HepG2 (cell line): ENCODE measurements at regions of chr14 and their contacts with region 1.

Region 1: GRCh38 chr14:31456841-31457664 is at the start of gene DTD2:
- DNase-seq: peak; percentile 98
- ATAC-seq: peak; percentile 98
- H3K4me3 ChIP-seq: peak within 1 kb of the TSS; percentile 74 to 88 (median 84)
- H3K27ac ChIP-seq: peak within 1 kb of the TSS; percentile 87
- H3K4me1 ChIP-seq: peaks cover 21% of the 10 kb centered on the region
- H3K27me3 ChIP-seq: no peaks in the 10 kb centered on the region; a peak in 1 of 5 replicates
- CTCF ChIP-seq: no peak
- EP300 ChIP-seq: peak; percentile 22 to 60; a peak in 2 of 4 replicates
- POLR2A ChIP-seq: peak; percentile 98 to 99
- RAD21 ChIP-seq: peak; percentile 79
- total RNA-seq, gene DTD2: 49.8 and 68.8 TPM in 2 replicates

Region 2: GRCh38 chr14:31380106-31380505 is 76.9 kb before region 1 on chr14:
- CTCF ChIA-PET with region 1: no interaction called
- POLR2A ChIA-PET with region 1: interaction called, 3 read pairs
- in situ Hi-C with region 1: no loop called
- intact Hi-C with region 1: loop called (anchors 2 kb)
- DNase-seq: no peak
- ATAC-seq: no peak
- H3K4me3 ChIP-seq: no peak overlapping the region
- H3K27ac ChIP-seq: no peak overlapping the region
- H3K4me1 ChIP-seq: peaks cover 26% of the 10 kb centered on the region
- H3K27me3 ChIP-seq: no peaks in the 10 kb centered on the region
- CTCF ChIP-seq: no peak
- EP300 ChIP-seq: no peak
- POLR2A ChIP-seq: no peak
- RAD21 ChIP-seq: no peak

Region 3: GRCh38 chr14:31429791-31430190 is 27.3 kb before region 1 on chr14:
- CTCF ChIA-PET with region 1: no interaction called
- POLR2A ChIA-PET with region 1: interaction called, 17 read pairs
- in situ Hi-C with region 1: loop called (anchors 5 kb)
- intact Hi-C with region 1: no loop called
- DNase-seq: no peak
- ATAC-seq: no peak
- H3K4me3 ChIP-seq: no peak overlapping the region
- H3K27ac ChIP-seq: no peak overlapping the region
- H3K4me1 ChIP-seq: peaks cover 8% of the 10 kb centered on the region; the same call in 1 of the 2 replicates
- H3K27me3 ChIP-seq: no peaks in the 10 kb centered on the region
- CTCF ChIP-seq: no peak
- EP300 ChIP-seq: no peak
- POLR2A ChIP-seq: no peak
- RAD21 ChIP-seq: no peak

Region 4: DNA sequence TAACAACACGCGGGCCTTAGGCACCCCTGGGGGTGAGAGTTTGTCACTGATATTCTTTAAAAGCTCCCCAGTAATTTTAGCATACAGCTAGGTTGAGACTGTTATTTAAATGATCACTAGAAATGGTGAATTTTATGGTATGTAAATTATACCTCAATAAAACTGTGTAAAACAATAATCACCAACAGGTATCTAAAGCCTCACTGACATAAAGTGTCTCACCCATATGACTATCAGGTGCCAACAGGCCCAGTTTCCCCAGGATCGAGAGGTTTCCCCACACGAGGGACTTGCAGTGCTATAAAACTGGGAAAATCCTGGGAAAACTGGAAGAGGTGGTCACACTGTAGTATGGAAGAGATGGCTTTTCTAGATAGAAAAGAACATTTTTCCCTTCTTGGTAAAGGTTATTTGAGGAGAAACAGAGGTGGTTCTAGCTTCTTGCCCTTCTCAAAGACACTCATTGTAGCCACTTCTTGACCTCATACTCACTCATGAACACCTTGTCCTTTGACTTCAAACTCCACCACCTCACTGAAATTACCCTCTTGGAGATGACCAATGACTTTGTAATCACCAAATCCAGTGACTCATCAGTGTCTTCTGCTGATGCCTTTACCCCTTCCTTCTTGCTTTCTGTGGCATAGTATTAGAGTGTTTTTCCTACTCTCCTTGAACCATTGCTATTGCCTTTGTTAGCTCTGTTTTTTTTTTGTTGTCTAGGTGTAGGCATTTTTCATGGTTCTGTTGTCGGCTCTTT is 79.3 kb after region 1 on chr14:
- CTCF ChIA-PET with region 1: no interaction called
- POLR2A ChIA-PET with region 1: no interaction called
- in situ Hi-C with region 1: no loop called
- intact Hi-C with region 1: no loop called
- DNase-seq: no peak
- ATAC-seq: no peak
- H3K4me3 ChIP-seq: no peak overlapping the region
- H3K27ac ChIP-seq: no peak overlapping the region
- H3K4me1 ChIP-seq: no peaks in the 10 kb centered on the region
- H3K27me3 ChIP-seq: no peaks in the 10 kb centered on the region; a peak in 2 of 5 replicates
- CTCF ChIP-seq: no peak
- EP300 ChIP-seq: no peak
- POLR2A ChIP-seq: no peak
- RAD21 ChIP-seq: no peak

Region 5: DNA sequence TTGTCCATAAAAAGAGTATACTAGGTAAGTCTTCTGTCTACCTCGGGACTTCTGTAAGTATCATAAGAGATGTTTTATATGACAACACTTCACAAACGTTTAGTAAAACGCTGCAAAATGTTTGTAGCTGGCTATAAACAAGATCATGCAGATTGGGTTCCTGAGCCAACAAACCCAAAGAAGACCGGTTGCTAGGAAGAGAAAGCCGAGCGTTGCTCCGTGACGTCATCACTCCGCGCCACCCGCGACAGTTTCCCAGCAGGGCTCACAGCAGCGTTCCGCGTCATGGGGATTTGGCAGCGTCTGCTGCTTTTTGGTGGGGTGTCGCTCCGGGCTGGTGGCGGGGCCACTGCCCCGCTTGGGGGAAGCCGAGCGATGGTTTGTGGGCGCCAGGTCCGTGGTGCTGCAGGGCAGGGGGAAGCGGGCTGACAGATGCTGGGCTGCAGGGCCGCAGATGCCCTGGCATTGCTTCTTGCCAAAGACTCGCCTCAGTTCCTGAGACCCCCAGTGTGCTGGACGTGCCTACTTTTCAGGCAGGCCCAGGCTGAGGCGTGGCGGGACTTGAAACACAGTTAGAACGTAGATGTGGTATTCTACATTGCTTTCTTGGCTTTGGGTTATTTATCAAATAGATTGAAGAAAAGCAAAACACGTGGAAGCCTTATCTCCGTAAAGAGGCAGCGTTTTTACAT is 104.2 kb after region 1 on chr14 and contains the start of gene NUBPL:
- CTCF ChIA-PET with region 1: no interaction called
- POLR2A ChIA-PET with region 1: interaction called, 10 read pairs
- in situ Hi-C with region 1: no loop called
- intact Hi-C with region 1: loop called (anchors 1 kb)
- DNase-seq: peak; percentile 97
- ATAC-seq: peak; percentile 95
- H3K4me3 ChIP-seq: peak within 1 kb of the TSS; percentile 84 to 93 (median 89)
- H3K27ac ChIP-seq: peak within 1 kb of the TSS; percentile 67
- H3K4me1 ChIP-seq: peaks cover 30% of the 10 kb centered on the region
- H3K27me3 ChIP-seq: no peaks in the 10 kb centered on the region; a peak in 1 of 5 replicates
- CTCF ChIP-seq: peak; percentile 43
- EP300 ChIP-seq: peak; percentile 80 to 91
- POLR2A ChIP-seq: peak; percentile 90 to 98
- RAD21 ChIP-seq: peak; percentile 73
- total RNA-seq, gene NUBPL: 44.1 and 67.1 TPM in 2 replicates